GM12878 (cell line): ENCODE measurements at regions of chr12 and their contacts with region 1.

Region 1: GRCh38 chr12:101697197-101697929 is at the start of gene CHPT1:
- DNase-seq: no peak
- ATAC-seq: peak; percentile 81
- H3K4me3 ChIP-seq: peak within 1 kb of the TSS; percentile 81
- H3K27ac ChIP-seq: peak within 1 kb of the TSS; percentile 33
- H3K4me1 ChIP-seq: peaks cover 4% of the 10 kb centered on the region
- H3K27me3 ChIP-seq: no peaks in the 10 kb centered on the region
- CTCF ChIP-seq: no peak
- EP300 ChIP-seq: no peak
- POLR2A ChIP-seq: peak; percentile 64
- RAD21 ChIP-seq: no peak
- polyA plus RNA-seq, gene CHPT1: 0.85 to 1.7 TPM

Region 2: DNA sequence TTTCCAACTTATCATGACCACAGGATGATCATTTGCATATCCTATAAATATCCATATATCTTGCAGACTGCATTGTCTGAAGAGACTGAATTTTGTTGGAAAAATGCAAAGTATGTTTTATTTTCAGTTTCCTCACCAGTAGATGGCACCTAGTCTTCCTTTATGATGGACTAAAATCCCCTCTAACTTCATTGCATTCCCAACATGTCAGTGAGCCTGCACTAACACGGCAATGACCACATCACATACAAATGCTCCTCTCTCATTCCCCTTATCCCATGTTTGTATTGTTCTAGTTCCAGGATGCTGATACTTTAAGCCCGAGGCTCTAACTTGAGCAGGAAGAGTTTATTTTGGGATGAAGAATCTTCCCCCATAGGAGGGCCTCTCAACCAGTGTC is 127.3 kb before region 1 on chr12:
- CTCF ChIA-PET with region 1: no interaction called
- POLR2A ChIA-PET with region 1: no interaction called
- RAD21 ChIA-PET with region 1: no interaction called
- SMC1A ChIA-PET with region 1: no interaction called
- in situ Hi-C with region 1: no loop called
- intact Hi-C with region 1: loop called (anchors 10 kb)
- DNase-seq: no peak
- ATAC-seq: peak; percentile 38; the same call in 1 of the 3 replicates
- H3K4me3 ChIP-seq: no peak overlapping the region
- H3K27ac ChIP-seq: no peak overlapping the region
- H3K4me1 ChIP-seq: no peaks in the 10 kb centered on the region
- H3K27me3 ChIP-seq: peaks cover 0 to 4% of the 10 kb centered on the region in 2 experiments; a peak in 1 of 4 replicates
- CTCF ChIP-seq: peak in 1 of 3 experiments; percentile 40; a peak in 3 of 6 replicates
- EP300 ChIP-seq: no peak
- POLR2A ChIP-seq: no peak
- RAD21 ChIP-seq: peak; percentile 31; the same call in 1 of the 2 replicates